Motor neuron (in vitro differentiated cells): ENCODE measurements at regions of chr9 and their contacts with region 1.

Region 1: GRCh38 chr9:137277329-137278041 is at the start of gene TOR4A:
- ATAC-seq: peak; percentile 24 to 84 (median 52)
- H3K4me3 ChIP-seq: no peak within 1 kb of the TSS
- H3K27ac ChIP-seq: peak within 1 kb of the TSS in 1 of 2 donors; percentile 6
- H3K4me1 ChIP-seq: peaks cover 12 to 17% of the 10 kb centered on the region in 2 donors
- total RNA-seq, gene TOR4A: 0.11 to 14.2 (median 0.71) TPM

Region 2: DNA sequence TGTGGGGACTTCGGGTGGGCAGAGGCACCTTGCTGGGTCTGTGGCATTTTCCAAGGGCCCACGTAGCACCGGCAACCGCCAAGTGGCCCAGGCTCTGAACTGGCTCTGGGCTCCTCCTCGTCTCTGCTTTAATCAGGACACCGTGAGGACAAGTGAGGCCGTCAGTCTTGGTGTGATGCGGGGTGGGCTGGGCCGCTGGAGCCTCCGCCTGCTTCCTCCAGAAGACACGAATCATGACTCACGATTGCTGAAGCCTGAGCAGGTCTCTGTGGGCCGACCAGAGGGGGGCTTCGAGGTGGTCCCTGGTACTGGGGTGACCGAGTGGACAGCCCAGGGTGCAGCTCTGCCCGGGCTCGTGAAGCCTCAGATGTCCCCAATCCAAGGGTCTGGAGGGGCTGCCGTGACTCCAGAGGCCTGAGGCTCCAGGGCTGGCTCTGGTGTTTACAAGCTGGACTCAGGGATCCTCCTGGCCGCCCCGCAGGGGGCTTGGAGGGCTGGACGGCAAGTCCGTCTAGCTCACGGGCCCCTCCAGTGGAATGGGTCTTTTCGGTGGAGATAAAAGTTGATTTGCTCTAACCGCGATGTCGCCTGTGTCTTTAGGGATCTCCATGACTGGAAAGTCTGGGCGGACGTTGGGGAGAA is 168.8 kb before region 1 on chr9:
- in situ Hi-C with region 1: no loop called
- ATAC-seq: peak in 1 of 8 experiments; percentile 6
- H3K4me3 ChIP-seq: no peak overlapping the region
- H3K27ac ChIP-seq: no peak overlapping the region
- H3K4me1 ChIP-seq: no peaks in the 10 kb centered on the region

Region 3: GRCh38 chr9:137423004-137423874 is 145.8 kb after region 1 on chr9 and contains the starts of genes EXD3 and NOXA1:
- in situ Hi-C with region 1: loop called in 2 of 9 experiments (anchors 25 kb)
- ATAC-seq: peak; percentile 72 to 87 (median 84)
- H3K4me3 ChIP-seq: peak within 1 kb of the TSS; percentile 51 to 98 (median 78)
- H3K27ac ChIP-seq: no peak within 1 kb of the TSS
- H3K4me1 ChIP-seq: peaks cover 6 to 10% of the 10 kb centered on the region in 2 donors
- total RNA-seq, gene EXD3: 3.2 to 14.8 (median 9.6) TPM
- total RNA-seq, gene NOXA1: 0.13 to 2.1 (median 0.32) TPM

Region 4: DNA sequence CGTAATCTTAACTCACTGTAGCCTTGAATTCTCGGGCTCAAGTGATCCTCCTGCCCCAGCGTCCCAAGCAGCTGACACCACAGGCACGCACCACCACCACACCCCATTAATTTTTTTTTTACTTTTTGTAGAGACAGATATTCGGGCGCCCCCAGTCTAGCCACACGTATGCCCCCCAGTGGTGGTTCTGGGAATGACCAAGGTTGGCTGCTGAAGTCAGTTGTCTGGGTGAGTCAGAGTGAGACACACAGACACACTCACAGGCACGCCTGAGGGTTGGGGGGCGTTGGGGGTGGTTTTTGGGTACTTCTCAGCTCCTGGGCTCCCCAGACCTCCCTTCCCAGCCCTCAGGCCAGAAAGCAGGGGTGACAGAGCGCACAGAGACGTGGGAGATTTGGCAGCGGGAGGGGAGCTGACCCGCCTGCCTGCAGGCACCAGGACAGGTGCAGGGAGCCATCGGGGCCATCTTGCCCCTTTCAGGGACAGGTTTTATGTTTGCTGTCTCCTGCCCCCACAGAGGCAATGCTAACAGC is 167.9 kb after region 1 on chr9:
- in situ Hi-C with region 1: loop called in 1 of 9 experiments (anchors 25 kb)
- ATAC-seq: peak; percentile 40 to 74 (median 48)
- H3K4me3 ChIP-seq: no peak overlapping the region
- H3K27ac ChIP-seq: no peak overlapping the region
- H3K4me1 ChIP-seq: peaks cover 4 to 8% of the 10 kb centered on the region in 2 donors